ENCODE measurements at regions of chr19 and their contacts with region 1.

Region 1: GRCh38 chr19:37719111-37719926 is at the start of gene ZNF607:
- DNase-seq: peak; percentile 85 to 98 (median 90)

Region 2: GRCh38 chr19:37691881-37692504 is 27.3 kb before region 1 on chr19:
- intact Hi-C with region 1: loop called (anchors 2 kb)
- DNase-seq: peak; percentile 84 to 98 (median 88)

Region 3: DNA sequence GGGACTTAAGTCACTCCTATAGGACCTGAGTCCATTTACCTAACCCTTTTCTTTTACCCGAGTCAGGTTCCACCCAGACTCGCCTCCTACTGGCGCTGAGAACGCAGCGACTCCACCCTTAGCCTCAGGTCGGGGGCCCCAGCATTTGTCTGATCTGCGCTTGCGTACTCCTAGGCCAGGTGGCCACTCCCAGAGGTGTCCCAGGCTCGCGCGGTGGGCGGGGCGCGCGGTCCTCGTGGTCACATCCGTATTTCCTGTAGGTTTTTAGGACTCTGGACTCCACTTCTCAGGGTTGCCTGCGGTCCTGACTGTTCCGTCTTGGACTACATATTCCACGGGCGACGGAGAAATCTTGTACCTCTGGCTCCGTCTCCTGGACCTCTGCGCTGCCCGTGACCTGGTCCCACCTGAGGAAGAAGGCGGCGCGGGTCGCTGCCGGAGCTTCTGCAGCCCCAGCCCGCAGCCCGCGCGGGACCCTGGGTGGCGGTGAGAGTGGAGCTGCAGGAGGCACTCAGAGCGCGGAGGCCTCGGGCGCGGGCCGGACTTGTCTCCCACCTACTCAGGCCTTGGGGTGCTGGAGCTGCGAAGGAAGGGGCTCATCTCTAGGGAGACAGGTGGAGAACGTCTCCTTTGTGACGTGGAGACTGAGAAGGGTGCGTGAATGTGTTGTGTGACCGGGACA is 71.1 kb after region 1 on chr19:
- intact Hi-C with region 1: no loop called
- DNase-seq: no peak

Region 4: DNA sequence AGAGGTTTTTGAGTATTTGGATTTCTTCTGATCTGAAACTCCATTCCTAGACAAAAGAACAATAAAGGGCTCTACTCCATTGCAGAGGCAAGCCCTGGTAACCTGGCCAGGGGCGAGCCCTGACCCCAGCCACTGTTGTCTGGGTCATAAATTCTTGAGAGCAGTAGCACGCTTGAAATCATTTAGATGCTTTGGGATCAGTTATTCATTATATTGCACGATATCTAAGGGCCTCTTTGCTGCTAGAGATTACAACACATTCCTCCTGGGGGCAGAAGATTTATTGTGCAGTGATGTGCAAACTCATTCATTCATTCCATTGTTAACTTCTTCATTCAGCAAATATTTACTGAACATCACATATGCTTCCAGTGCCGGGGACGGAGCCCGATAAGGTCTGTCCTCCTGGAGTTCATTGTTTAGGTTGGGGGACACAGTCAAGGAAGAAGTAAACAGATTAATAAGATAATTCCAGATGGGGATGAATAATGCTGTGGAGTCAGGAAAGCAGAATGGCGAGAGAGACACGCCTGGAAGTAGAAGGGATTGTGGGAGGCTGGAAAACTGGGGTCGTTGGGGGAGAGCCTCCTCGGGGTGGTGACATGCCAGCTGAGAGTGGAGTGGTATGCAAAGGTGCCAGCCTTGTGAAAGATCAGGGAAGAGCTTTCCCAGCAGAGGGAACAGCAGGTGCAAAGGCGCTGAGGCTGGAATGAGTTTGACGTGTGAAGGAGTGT is 222.6 kb after region 1 on chr19:
- intact Hi-C with region 1: no loop called
- DNase-seq: no peak